ENCODE measurements at regions of chr16 and their contacts with region 1.

Region 1: DNA sequence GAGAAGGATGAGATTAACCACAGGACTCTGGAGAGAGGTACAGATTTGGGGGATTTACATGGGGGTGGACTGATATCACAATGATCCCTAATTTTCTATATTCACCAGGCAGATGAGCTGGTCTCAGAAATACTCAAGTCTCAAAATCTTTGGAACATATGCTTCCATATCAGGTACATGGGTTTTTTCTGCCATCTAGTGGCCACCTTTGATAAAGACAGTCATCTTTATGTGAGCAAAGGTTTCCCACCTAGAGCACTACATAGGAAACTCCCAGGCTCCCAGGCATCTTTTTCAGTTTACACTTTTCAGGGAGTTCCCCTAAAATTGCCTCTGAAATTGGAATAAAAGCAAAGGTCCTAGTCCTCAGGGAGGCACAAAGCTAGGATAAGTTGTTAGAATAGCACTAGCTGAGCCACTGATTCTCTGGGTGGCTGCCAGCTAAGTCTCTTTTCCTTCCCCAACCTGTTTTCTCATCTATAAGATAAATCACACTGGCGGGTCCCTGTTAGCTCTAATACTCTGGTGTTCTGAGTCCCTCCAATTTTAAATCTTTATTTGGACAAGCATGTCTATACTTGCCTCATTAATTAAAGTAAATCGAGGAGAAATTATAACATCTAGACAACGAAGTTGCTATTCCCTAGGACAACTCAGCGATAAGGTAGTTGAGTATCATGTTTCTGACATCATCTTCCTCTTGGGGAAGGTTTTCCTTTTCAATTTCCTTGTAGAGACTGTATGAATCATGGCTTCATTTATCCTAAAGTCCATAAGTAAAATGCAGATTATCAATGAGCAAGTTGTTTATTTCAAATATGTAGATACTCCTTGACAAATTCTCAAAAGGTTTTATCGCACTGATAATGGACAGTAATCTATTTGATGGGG is 19.0 kb upstream of the MON1B start:
- DNase-seq: no peak
- ATAC-seq: peak; percentile 67

Region 2: DNA sequence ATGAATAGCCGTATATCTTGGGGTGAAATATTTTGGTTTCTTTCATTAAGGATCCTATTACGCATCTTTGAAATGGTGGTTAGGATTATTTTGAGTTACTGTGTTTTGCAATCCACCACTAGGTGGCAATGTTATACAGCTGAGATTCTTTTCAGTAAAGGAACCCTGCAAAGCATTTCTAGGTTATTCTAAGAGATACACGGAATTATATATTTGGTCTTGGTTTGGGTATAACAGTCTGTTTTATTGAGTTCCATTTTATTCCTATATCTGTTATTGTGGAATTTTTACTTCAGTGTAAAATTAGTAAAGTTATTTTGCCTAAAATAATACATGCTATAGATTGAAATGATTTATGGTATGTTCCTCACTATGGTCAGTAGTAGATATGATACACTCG is 1382.8 kb before region 1 on chr16:
- intact Hi-C with region 1: loop called in 1 of 2 experiments (anchors 5 kb)
- DNase-seq: no peak
- ATAC-seq: peak; percentile 44

Measured in left colon (tissue), 2 donors.